MCF 10A (cell line): ENCODE measurements at regions of chr20 and their contacts with region 1.

Region 1: DNA sequence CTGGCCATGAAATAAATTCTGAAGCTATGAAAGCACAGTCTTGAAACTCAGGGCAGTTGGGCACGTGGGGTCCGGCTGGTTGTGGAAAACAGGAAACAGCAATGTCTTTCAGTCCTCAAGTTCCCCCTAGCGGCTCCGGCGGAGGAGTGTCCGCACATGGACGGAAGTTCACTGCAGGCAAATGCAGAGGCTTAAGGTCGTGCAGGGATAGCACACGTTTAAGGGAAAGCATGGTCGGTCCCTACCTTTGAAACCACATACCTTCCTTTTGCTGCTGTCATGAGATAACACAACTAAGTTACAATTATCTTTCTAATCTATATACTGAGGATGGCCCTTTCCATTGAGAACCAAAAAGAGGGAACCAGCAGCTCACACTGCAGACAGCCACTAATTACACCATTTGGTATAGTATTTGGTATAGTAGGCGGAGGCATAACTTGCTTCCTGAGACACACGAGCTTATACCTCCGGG is 52.6 kb upstream of the NFATC2 start:
- DNase-seq: peak; percentile 86
- H3K4me3 Mint-ChIP-seq: no peak overlapping the region
- H3K27ac Mint-ChIP-seq: peak overlapping the region; percentile 61
- H3K4me1 Mint-ChIP-seq: peaks cover 6% of the 10 kb centered on the region
- H3K27me3 Mint-ChIP-seq: no peaks in the 10 kb centered on the region
- CTCF ChIP-seq: peak; percentile 92

Region 2: GRCh38 chr20:50980851-50981713 is 614.0 kb before region 1 on chr20:
- CTCF ChIA-PET with region 1: interaction called, 113 read pairs
- POLR2A ChIA-PET with region 1: no interaction called
- intact Hi-C with region 1: no loop called
- DNase-seq: peak; percentile 80
- H3K4me3 Mint-ChIP-seq: no peak overlapping the region
- H3K27ac Mint-ChIP-seq: peak overlapping the region; percentile 97
- H3K4me1 Mint-ChIP-seq: peaks cover 34% of the 10 kb centered on the region
- H3K27me3 Mint-ChIP-seq: no peaks in the 10 kb centered on the region
- CTCF ChIP-seq: peak; percentile 75

Region 3: GRCh38 chr20:51366155-51366886 is 228.8 kb before region 1 on chr20:
- CTCF ChIA-PET with region 1: interaction called, 128 read pairs
- POLR2A ChIA-PET with region 1: interaction called, 5 read pairs
- intact Hi-C with region 1: no loop called
- DNase-seq: peak; percentile 87
- H3K4me3 Mint-ChIP-seq: peak overlapping the region; percentile 20
- H3K27ac Mint-ChIP-seq: peak overlapping the region; percentile 81
- H3K4me1 Mint-ChIP-seq: peaks cover 15% of the 10 kb centered on the region
- H3K27me3 Mint-ChIP-seq: no peaks in the 10 kb centered on the region
- CTCF ChIP-seq: no peak

Region 4: DNA sequence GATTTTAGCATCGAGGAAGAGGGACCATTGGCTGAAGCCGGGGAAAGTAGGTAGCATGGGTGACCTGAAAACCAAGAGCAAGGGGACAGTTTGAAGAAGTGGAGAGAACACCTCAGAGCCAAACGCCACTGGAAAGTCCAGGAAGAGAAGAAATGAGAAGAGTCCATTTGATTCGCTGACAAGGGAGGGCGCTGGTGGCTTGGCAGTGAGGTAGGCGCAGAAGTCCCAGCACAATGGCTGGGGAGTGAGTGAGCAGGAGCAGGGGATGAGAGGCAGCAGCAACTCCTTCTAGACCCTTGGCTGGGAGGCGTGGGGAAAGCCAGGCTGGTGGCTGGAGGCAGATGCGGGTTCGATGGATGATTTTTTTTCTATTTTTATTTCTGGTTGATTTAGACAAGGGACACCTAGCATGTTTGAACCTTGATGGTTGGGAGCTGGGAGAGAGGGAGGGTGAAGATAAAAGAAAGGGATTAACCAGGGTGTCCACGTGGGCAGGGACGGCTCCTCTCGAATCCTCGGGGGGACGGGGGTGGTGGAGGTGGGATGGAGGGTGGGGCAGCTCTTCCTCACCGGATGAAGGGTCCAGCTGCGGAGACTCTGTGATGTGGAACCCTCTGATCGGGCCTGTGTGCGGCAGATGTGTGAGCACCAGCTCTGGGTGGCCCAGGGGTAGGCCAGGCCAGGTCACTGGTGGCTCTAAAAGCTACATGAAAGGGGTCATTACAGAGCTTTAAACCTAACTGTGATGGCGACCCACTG is 216.7 kb before region 1 on chr20:
- CTCF ChIA-PET with region 1: interaction called, 128 read pairs
- POLR2A ChIA-PET with region 1: interaction called, 4 read pairs
- intact Hi-C with region 1: no loop called
- DNase-seq: no peak
- H3K4me3 Mint-ChIP-seq: no peak overlapping the region
- H3K27ac Mint-ChIP-seq: no peak overlapping the region
- H3K4me1 Mint-ChIP-seq: no peaks in the 10 kb centered on the region
- H3K27me3 Mint-ChIP-seq: no peaks in the 10 kb centered on the region
- CTCF ChIP-seq: peak; percentile 10

Region 5: GRCh38 chr20:51456511-51457509 is 138.3 kb before region 1 on chr20:
- CTCF ChIA-PET with region 1: interaction called, 10 read pairs
- POLR2A ChIA-PET with region 1: interaction called, 3 read pairs
- intact Hi-C with region 1: no loop called
- DNase-seq: peak; percentile 98
- H3K4me3 Mint-ChIP-seq: peak overlapping the region; percentile 76
- H3K27ac Mint-ChIP-seq: peak overlapping the region; percentile 85
- H3K4me1 Mint-ChIP-seq: peaks cover 13% of the 10 kb centered on the region
- H3K27me3 Mint-ChIP-seq: no peaks in the 10 kb centered on the region
- CTCF ChIP-seq: no peak

Region 6: GRCh38 chr20:51608061-51608460 is 13.0 kb after region 1 on chr20:
- CTCF ChIA-PET with region 1: interaction called, 18 read pairs
- POLR2A ChIA-PET with region 1: no interaction called
- intact Hi-C with region 1: no loop called
- DNase-seq: no peak
- H3K4me3 Mint-ChIP-seq: no peak overlapping the region
- H3K27ac Mint-ChIP-seq: no peak overlapping the region
- H3K4me1 Mint-ChIP-seq: no peaks in the 10 kb centered on the region
- H3K27me3 Mint-ChIP-seq: no peaks in the 10 kb centered on the region
- CTCF ChIP-seq: no peak